Gastrocnemius medialis (tissue), 4 donors: ENCODE measurements at regions of chr3 and their contacts with region 1.

Region 1: GRCh38 chr3:61927332-61927731 is 366.0 kb downstream of the PTPRG start:
- DNase-seq: peak; percentile 69 to 84
- ATAC-seq: peak; percentile 59 to 64
- H3K4me3 ChIP-seq: peak overlapping the region; percentile 4 to 42 (median 26)
- H3K27ac ChIP-seq: peak overlapping the region; percentile 86 to 93 (median 91)
- H3K4me1 ChIP-seq: peaks cover 54 to 73% of the 10 kb centered on the region in 2 donors
- H3K27me3 ChIP-seq: no peaks in the 10 kb centered on the region
- CTCF ChIP-seq: no peak
- POLR2A ChIP-seq: no peak

Region 2: DNA sequence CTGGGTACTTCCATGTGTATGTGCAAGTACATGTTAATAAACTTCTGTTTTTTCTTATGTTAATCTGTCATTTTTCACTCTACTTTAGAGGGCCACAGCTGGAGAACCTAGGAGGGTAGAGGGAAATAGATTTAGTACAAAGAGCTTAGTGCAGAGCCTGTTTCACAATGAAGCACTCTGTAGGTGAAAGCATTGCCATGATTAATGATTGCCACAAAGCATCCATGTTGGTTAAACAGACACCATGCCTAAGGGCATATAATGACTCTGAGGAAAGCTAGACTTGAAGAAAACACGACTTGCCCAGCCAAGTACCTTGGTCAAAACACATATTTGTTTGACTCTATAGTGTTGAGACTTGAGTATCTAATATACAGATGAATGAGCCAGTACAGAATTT is 1014.5 kb before region 1 on chr3:
- in situ Hi-C with region 1: no loop called
- intact Hi-C with region 1: no loop called
- DNase-seq: no peak
- ATAC-seq: no peak
- H3K4me3 ChIP-seq: no peak overlapping the region
- H3K27ac ChIP-seq: no peak overlapping the region
- H3K4me1 ChIP-seq: no peaks in the 10 kb centered on the region
- H3K27me3 ChIP-seq: no peaks in the 10 kb centered on the region
- CTCF ChIP-seq: no peak
- POLR2A ChIP-seq: no peak

Region 3: DNA sequence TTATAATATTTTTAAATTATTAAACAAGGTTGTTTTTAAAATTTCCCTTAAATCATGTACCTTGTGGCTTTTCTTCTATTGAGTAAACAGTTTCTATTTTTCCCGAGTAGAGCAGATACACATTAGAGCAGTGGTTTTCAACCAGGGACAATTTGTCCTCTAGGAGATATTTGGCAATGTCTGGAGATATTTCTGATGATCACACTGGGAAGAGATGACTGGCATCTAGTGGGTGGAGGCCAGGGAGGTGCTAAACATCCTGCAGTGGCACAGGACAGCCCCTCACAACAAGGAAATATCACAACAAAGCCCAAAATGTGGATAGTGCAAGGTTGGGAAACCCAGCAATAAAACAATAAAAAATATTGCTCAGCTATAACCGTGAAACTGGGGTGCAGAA is 479.0 kb before region 1 on chr3:
- in situ Hi-C with region 1: no loop called
- intact Hi-C with region 1: loop called (anchors 5 kb)
- DNase-seq: peak; percentile 12 to 50
- ATAC-seq: peak; percentile 98
- H3K4me3 ChIP-seq: no peak overlapping the region
- H3K27ac ChIP-seq: peak overlapping the region; percentile 71 to 80 (median 76)
- H3K4me1 ChIP-seq: peaks cover 24 to 34% of the 10 kb centered on the region in 2 donors
- H3K27me3 ChIP-seq: no peaks in the 10 kb centered on the region
- CTCF ChIP-seq: no peak
- POLR2A ChIP-seq: no peak

Region 4: GRCh38 chr3:61858056-61858455 is 69.3 kb before region 1 on chr3:
- in situ Hi-C with region 1: no loop called
- intact Hi-C with region 1: loop called (anchors 1 kb)
- DNase-seq: no peak
- ATAC-seq: peak; percentile 53 to 79
- H3K4me3 ChIP-seq: no peak overlapping the region
- H3K27ac ChIP-seq: no peak overlapping the region
- H3K4me1 ChIP-seq: peaks cover 25 to 40% of the 10 kb centered on the region in 2 donors
- H3K27me3 ChIP-seq: no peaks in the 10 kb centered on the region
- CTCF ChIP-seq: peak; percentile 16 to 67 (median 60)
- POLR2A ChIP-seq: no peak

Region 5: DNA sequence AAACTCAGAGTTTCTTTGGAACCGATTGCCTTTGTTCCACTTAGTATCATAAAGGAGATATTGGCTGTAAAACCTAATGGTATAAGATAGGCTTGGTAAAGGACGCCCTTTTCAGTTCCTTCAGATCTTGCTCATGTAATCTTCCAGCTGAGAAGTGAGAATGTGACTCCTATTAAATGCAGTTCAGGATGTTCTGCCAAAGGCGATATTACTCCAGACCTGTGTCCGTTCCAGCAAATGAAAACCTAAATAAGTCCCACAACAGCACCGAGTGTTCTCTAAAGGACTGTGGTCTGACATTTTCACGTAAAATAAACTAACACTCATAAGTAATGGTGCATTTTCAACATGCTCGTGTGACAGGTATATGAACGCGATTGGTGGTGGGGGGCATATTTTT is 169.8 kb after region 1 on chr3:
- in situ Hi-C with region 1: no loop called
- intact Hi-C with region 1: loop called (anchors 2 kb)
- DNase-seq: peak; percentile 76 to 80
- ATAC-seq: peak; percentile 87 to 88
- H3K4me3 ChIP-seq: peak overlapping the region in 3 of 4 donors; percentile 21 to 29 (median 27)
- H3K27ac ChIP-seq: peak overlapping the region; percentile 87 to 95 (median 90)
- H3K4me1 ChIP-seq: peaks cover 52 to 68% of the 10 kb centered on the region in 2 donors
- H3K27me3 ChIP-seq: no peaks in the 10 kb centered on the region
- CTCF ChIP-seq: no peak
- POLR2A ChIP-seq: peak in 1 of 2 donors; percentile 39

Region 6: DNA sequence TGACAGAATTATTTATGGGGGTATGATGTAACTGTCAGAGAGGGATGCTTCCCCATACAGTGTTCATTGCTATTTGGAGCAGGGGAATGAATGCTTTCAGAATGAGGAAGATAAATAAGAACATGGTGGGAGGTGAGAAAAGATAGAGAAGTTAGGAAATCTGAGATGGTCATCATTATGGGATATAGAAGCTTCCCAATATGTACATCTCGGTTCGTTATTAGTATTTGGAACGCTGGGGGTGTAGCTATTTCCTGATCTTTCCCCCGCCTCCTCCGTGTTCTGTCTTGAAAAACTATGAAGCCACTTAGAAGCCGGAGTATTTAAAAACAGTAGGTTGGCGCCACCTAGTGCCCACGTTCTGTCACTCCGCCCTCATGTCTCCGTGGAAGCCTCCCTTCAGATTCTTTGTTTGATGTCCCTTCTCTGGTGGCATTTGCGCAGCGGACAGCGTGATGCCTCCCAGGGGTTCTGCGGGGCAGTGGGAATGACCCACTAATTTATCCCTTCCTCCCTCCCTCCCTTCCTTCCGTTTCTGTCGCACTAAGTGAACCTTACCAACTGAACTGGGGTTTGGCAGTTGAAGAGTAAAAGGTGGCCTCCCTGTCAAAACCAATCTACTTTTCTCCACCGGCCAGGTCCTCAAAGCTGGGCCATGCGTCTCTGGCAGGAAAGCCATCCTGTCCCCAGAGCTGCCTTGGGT is 261.5 kb after region 1 on chr3:
- in situ Hi-C with region 1: no loop called
- intact Hi-C with region 1: loop called (anchors 5 kb)
- DNase-seq: peak; percentile 57 to 73
- ATAC-seq: peak; percentile 67 to 80
- H3K4me3 ChIP-seq: peak overlapping the region in 3 of 4 donors; percentile 10 to 29 (median 25)
- H3K27ac ChIP-seq: peak overlapping the region in 1 of 4 donors; percentile 41
- H3K4me1 ChIP-seq: peaks cover 11 to 12% of the 10 kb centered on the region in 2 donors
- H3K27me3 ChIP-seq: no peaks in the 10 kb centered on the region
- CTCF ChIP-seq: peak; percentile 73 to 88 (median 86)
- POLR2A ChIP-seq: no peak

Region 7: DNA sequence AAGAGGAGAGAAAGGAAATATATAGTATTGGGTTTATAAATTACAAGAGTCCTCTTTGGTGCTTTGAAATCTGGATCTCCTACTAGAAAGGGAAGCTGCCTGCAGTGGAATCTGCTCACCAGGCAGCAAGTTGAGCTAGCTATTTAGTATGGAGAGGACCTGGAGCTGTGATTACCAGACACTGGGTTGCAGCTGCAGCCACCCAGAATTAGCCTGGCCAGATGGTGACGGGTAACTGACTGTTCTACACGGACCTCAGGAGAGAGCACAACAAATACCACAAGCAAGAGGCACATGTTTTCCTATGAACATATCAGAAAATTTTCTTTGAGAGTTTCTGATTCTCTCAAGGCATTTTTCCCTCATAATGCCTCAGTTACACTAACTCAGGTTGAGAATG is 1397.3 kb after region 1 on chr3:
- in situ Hi-C with region 1: no loop called
- intact Hi-C with region 1: no loop called
- DNase-seq: no peak
- ATAC-seq: no peak
- H3K4me3 ChIP-seq: no peak overlapping the region
- H3K27ac ChIP-seq: no peak overlapping the region
- H3K4me1 ChIP-seq: no peaks in the 10 kb centered on the region
- H3K27me3 ChIP-seq: no peaks in the 10 kb centered on the region
- CTCF ChIP-seq: no peak
- POLR2A ChIP-seq: no peak